ENCODE measurements at regions of chr12 and their contacts with region 1.

Region 1: GRCh38 chr12:102169922-102170621 is 27.6 kb downstream of the PMCH start:
- DNase-seq: no peak

Region 2: DNA sequence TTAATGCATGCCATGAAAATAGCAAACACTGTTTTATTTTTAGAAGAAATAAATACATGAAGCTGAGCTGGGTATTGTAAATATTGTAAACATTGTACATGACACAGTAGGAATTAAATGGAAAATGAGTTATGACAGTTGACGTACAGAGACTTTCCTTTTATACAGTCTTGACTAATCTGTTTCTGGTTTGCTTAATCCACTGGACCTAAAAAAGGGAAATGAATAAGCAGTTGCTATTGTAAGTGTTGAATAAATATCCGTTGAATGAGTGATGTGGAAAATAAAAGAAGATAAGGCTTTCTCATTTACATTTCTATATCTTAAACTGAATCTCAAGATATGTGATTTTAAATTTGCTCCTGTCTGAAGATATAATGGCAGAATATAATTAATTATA is 12.6 kb after region 1 on chr12:
- intact Hi-C with region 1: no loop called
- DNase-seq: no peak

Region 3: GRCh38 chr12:102479099-102479887 is 309.2 kb after region 1 on chr12:
- intact Hi-C with region 1: loop called (anchors 10 kb)
- DNase-seq: peak in 1 of 10 donors; percentile 7

Region 4: DNA sequence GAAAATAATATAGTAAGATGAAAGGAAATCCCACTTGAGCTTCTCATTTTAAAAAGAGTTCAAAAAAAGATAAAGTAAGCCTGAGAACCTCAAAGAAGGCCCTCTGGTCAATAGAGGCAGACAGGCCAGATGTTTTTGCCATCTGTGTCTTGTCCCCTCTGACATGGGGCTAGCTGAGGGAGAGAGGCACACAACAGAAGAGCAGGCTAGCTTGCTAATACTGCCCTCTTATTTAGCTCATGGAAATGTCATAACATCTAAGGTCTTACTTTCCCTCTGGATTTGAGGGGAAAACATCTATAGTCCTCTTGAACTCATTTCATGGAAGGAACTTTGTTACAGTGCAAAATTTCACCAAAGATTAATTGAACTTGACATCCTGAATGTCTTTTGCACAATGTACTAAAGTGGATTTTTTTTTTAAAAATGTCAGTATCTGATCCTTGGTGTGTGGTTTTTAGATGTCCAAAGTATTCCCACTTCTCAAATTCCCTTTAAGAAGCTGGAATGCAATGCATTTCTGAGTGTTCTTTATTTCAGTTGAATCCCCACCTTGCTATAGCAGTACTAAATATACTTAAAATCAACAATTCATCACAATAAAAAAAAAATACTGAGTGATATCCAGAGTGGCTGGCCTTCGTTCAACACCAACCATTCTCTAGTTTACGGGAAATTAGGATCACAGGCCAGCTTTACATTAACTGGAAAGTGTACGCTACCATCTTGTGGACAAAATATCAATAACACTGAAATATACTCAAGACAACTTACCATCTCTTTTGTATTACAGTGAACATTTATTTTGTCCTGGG is 570.3 kb after region 1 on chr12:
- intact Hi-C with region 1: loop called (anchors 2 kb)
- DNase-seq: no peak